ENCODE measurements at regions of chr10 and their contacts with region 1.

Region 1: DNA sequence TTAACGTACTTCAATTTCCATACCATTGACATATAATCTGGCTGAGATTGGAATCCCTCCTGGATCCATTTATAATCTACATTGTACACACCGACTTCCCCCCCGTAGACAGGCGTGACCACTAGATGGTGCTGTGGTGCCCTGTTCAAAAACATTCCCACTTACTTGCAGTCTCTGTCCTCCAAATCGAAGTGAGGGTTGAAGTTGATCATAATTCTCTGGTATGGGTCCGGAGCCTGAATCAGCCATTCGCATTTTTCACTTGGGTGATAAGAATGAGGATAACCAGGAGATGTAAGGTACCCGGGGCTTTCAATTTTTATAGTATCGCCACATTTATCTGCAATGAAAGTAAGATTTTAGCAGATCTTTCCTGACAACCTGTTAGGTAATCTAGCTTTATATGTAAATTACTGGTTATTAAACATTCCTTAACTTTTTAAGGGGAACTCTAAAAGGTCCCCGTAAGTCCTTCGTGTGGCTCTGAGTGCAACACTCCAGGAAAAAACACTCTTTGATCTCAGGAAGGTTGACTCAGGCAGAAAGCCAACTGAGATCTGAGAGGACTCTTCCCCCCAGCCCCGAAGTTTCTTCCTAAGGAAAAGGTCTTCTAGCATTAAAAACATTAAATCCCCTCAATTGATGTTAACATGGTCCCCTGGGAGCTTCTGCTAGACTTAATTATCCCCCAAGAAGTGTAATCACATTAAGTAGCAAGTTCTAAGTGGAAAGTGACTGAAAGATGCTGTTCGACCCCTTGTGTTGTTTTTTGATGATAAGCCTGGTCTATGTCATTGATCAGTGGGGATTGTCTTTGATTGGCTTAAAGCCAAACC is 3.7 kb downstream of the NRP1 start:
- DNase-seq: peak in 1 of 2 donors; percentile 91
- H3K4me3 ChIP-seq: peak overlapping the region; percentile 71 to 93
- H3K27ac ChIP-seq: peak overlapping the region in 1 of 2 donors; percentile 22
- H3K4me1 ChIP-seq: peaks cover 0 to 33% of the 10 kb centered on the region in 2 donors
- H3K27me3 ChIP-seq: no peaks in the 10 kb centered on the region
- CTCF ChIP-seq: peak; percentile 70 to 91 (median 89)

Region 2: DNA sequence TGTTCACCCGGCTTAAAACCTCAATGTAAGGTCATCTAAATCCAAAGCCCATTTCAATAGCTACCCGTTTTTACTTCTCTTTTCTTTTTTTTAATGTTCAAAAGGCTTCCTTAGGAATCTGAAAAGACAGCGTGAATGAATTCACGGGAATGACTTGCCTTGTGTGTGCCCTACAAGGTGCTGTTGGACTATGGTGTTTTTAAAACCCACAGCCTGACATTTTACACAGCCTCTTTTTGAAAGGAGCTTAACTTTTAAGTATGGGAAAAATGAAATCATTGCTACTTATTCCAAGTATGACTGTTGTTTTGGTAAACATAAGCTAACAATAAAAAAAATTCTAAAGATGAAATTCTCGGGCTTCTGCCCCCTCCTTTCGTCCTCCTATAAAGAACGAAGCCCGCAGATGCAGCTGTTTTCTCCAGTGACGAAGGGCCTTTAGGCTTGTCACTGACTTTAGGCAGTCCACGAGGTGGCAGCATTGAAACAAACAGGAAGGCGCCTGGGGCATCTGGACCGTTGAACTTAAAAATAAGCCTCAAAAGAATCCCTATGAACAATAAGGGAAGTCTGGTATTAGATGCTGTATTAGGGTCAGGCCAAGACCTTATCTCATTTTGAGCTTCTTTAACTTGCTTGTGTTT is 137.6 kb before region 1 on chr10:
- intact Hi-C with region 1: loop called (anchors 1 kb)
- DNase-seq: peak; percentile 48 to 91
- H3K4me3 ChIP-seq: no peak overlapping the region
- H3K27ac ChIP-seq: peak overlapping the region; percentile 19 to 64
- H3K4me1 ChIP-seq: peaks cover 0 to 9% of the 10 kb centered on the region in 2 donors
- H3K27me3 ChIP-seq: no peaks in the 10 kb centered on the region
- CTCF ChIP-seq: peak; percentile 72 to 88 (median 86)

Region 3: GRCh38 chr10:33273295-33274002 is 57.3 kb before region 1 on chr10:
- intact Hi-C with region 1: loop called (anchors 1 kb)
- DNase-seq: peak; percentile 68 to 97
- H3K4me3 ChIP-seq: peak overlapping the region; percentile 43 to 54
- H3K27ac ChIP-seq: peak overlapping the region; percentile 73 to 93
- H3K4me1 ChIP-seq: peaks cover 0 to 33% of the 10 kb centered on the region in 2 donors
- H3K27me3 ChIP-seq: no peaks in the 10 kb centered on the region
- CTCF ChIP-seq: peak in 1 of 3 experiments; percentile 31

Region 4: GRCh38 chr10:33509231-33509831 is 178.6 kb after region 1 on chr10:
- intact Hi-C with region 1: loop called (anchors 5 kb)
- DNase-seq: peak; percentile 30 to 86
- H3K4me3 ChIP-seq: peak overlapping the region in 1 of 2 donors; percentile 19
- H3K27ac ChIP-seq: peak overlapping the region; percentile 62 to 71
- H3K4me1 ChIP-seq: peaks cover 0 to 28% of the 10 kb centered on the region in 2 donors
- H3K27me3 ChIP-seq: no peaks in the 10 kb centered on the region
- CTCF ChIP-seq: no peak

Region 5: GRCh38 chr10:34102237-34102673 is 771.5 kb after region 1 on chr10:
- intact Hi-C with region 1: loop called (anchors 10 kb)
- DNase-seq: peak in 1 of 2 donors; percentile 86
- H3K4me3 ChIP-seq: peak overlapping the region in 1 of 2 donors; percentile 44
- H3K27ac ChIP-seq: peak overlapping the region; percentile 84 to 85
- H3K4me1 ChIP-seq: peaks cover 7 to 33% of the 10 kb centered on the region in 2 donors
- H3K27me3 ChIP-seq: no peaks in the 10 kb centered on the region
- CTCF ChIP-seq: no peak

Region 6: DNA sequence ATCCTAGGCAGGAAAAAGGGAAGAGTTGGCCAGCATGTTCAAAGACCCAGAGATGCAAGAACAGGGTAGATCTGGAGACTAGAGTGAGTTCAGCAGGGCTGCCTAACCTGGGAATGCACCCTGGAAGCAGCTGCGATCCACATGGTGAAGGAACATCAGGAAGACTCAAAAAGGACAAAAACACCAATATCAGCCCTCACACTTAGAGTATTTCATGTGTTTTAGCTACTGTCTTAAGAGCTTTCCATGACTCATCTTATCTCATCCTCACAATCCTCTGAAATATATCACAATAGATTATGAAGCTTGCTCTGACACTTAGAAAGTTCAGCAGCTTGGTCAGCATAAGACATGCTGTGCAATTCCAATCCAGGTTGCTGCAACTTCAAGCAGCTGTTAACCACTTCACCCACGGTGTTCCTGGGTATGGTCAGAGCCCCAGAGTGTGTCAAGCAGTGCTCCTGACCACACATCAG is 1103.4 kb after region 1 on chr10:
- intact Hi-C with region 1: loop called (anchors 5 kb)
- DNase-seq: no peak
- H3K4me3 ChIP-seq: no peak overlapping the region
- H3K27ac ChIP-seq: no peak overlapping the region
- H3K4me1 ChIP-seq: no peaks in the 10 kb centered on the region
- H3K27me3 ChIP-seq: no peaks in the 10 kb centered on the region
- CTCF ChIP-seq: no peak

Region 7: GRCh38 chr10:34637418-34637911 is 1306.7 kb after region 1 on chr10:
- intact Hi-C with region 1: loop called (anchors 2 kb)
- DNase-seq: peak in 1 of 2 donors; percentile 78
- H3K4me3 ChIP-seq: no peak overlapping the region
- H3K27ac ChIP-seq: no peak overlapping the region
- H3K4me1 ChIP-seq: peaks cover 0 to 11% of the 10 kb centered on the region in 2 donors
- H3K27me3 ChIP-seq: no peaks in the 10 kb centered on the region
- CTCF ChIP-seq: peak; percentile 86 to 96 (median 95)

Measured in ascending aorta (tissue), 2 donors.